IMR-90 (cell line): ENCODE measurements at regions of chr3 and their contacts with region 1.

Region 1: GRCh38 chr3:157154563-157155330 is 5.2 kb downstream of the CCNL1 start:
- DNase-seq: no peak
- ATAC-seq: no peak
- H3K4me3 ChIP-seq: peak overlapping the region; percentile 31
- H3K27ac ChIP-seq: no peak overlapping the region
- H3K4me1 ChIP-seq: peaks cover 6% of the 10 kb centered on the region
- H3K27me3 ChIP-seq: no peaks in the 10 kb centered on the region
- CTCF ChIP-seq: no peak
- POLR2A ChIP-seq: no peak
- RAD21 ChIP-seq: no peak

Region 2: GRCh38 chr3:156535162-156535627 is 619.6 kb before region 1 on chr3:
- CTCF ChIA-PET with region 1: no interaction called
- POLR2A ChIA-PET with region 1: interaction called, 14 read pairs
- dilution Hi-C with region 1: no loop called
- in situ Hi-C with region 1: no loop called
- intact Hi-C with region 1: no loop called
- DNase-seq: peak; percentile 100
- ATAC-seq: peak; percentile 88
- H3K4me3 ChIP-seq: no peak overlapping the region
- H3K27ac ChIP-seq: peak overlapping the region; percentile 28; the same call in 1 of the 2 replicates
- H3K4me1 ChIP-seq: peaks cover 18% of the 10 kb centered on the region
- H3K27me3 ChIP-seq: no peaks in the 10 kb centered on the region
- CTCF ChIP-seq: peak; percentile 53
- POLR2A ChIP-seq: peak; percentile 74
- RAD21 ChIP-seq: peak; percentile 61

Region 3: GRCh38 chr3:156743859-156744258 is 410.9 kb before region 1 on chr3:
- CTCF ChIA-PET with region 1: no interaction called
- POLR2A ChIA-PET with region 1: no interaction called
- dilution Hi-C with region 1: no loop called
- in situ Hi-C with region 1: no loop called
- intact Hi-C with region 1: no loop called
- DNase-seq: no peak
- ATAC-seq: no peak
- H3K4me3 ChIP-seq: no peak overlapping the region
- H3K27ac ChIP-seq: no peak overlapping the region
- H3K4me1 ChIP-seq: 0 out of 2 replicates have a peak, but pooled peaks cover 2% of the 10 kb centered on the region
- H3K27me3 ChIP-seq: no peaks in the 10 kb centered on the region
- CTCF ChIP-seq: no peak
- POLR2A ChIP-seq: no peak
- RAD21 ChIP-seq: no peak

Region 4: DNA sequence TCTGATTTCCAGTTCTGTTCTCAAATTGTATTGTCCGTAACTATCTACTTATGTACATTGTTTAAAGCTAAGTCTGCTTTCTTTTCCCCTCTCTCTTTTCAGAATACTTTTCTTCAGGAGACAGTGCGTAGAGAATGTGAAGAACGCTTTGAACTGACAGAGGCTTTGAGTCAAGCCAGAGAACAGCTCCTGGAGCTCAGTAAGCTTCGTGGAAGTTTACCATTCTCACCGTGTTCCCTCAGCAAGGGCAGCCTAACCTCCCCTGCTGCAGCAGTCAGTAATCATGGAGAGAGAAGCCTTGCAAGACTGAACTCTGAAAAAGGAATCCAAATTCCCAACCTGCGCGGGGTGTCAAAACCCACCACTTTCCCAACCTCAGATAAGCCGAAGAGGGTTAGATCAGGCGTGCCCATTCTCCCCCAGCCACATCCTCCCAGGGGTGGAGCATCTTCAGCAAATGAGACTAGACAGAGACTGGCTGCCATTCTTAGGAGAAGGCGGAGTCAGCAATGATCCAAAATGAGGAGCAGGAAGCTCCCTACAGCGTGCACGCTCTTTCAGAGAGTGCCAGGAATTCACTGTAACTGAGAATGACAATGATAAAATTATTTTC is 109.4 kb before region 1 on chr3:
- CTCF ChIA-PET with region 1: no interaction called
- POLR2A ChIA-PET with region 1: no interaction called
- dilution Hi-C with region 1: no loop called
- in situ Hi-C with region 1: no loop called
- intact Hi-C with region 1: no loop called
- DNase-seq: no peak
- ATAC-seq: no peak
- H3K4me3 ChIP-seq: no peak overlapping the region
- H3K27ac ChIP-seq: no peak overlapping the region
- H3K4me1 ChIP-seq: no peaks in the 10 kb centered on the region
- H3K27me3 ChIP-seq: peaks cover 13% of the 10 kb centered on the region
- CTCF ChIP-seq: no peak
- POLR2A ChIP-seq: no peak
- RAD21 ChIP-seq: no peak